ENCODE measurements at regions of chr19 and their contacts with region 1.

Region 1: GRCh38 chr19:35135389-35135909 is 590 bp upstream of the LGI4 start:
- H3K4me3 Mint-ChIP-seq: no peak overlapping the region
- H3K27ac Mint-ChIP-seq: no peak overlapping the region
- H3K4me1 Mint-ChIP-seq: peaks cover 21% of the 10 kb centered on the region
- H3K27me3 Mint-ChIP-seq: peaks cover 37% of the 10 kb centered on the region

Region 2: DNA sequence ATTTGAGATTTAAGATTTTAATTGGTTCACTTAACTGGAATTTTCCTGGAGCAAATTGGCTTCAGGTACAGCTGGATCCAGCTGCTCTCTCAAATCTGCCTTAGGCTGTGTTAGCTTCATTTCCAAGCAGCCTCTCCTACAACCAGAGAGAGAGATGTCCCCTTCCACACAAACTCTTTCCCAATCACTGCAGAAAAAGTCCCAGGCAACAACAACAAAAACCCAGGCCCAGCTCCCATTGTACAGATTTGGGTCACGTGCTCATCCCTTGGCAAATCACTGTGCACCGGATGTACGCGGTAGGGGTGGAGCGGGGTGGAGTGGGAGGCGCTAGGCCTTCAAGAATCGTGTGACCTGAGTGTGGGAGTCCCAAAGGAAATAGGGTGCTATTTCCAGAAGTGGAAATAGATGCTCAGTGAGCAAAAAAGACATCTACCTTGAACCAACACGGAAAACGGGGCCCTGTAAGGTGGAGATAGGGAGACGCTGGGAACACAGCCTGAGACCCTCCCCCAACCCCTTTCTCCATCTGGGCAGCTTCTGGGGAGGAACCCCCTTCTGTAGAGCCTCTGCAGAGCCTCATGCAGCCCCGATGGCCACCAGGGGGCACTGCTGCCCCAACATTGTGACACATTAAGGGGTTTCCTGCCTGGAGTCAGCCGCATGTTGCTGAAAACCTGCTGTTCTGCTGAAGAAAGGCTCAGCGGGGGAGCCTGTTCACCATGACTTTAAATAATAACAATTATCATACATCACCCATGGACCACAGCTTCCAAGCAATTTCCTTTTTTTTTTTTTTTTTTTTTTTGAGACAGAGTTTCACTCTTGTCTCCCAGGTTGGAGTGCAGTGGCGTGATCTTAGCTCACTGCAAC is 68.5 kb before region 1 on chr19:
- intact Hi-C with region 1: loop called (anchors 1 kb)
- H3K4me3 Mint-ChIP-seq: peak overlapping the region; percentile 30
- H3K27ac Mint-ChIP-seq: no peak overlapping the region
- H3K4me1 Mint-ChIP-seq: peaks cover 6% of the 10 kb centered on the region
- H3K27me3 Mint-ChIP-seq: peaks cover 13% of the 10 kb centered on the region

Region 3: GRCh38 chr19:35114353-35115176 is 20.9 kb before region 1 on chr19:
- intact Hi-C with region 1: loop called (anchors 1 kb)
- H3K4me3 Mint-ChIP-seq: peak overlapping the region; percentile 61
- H3K27ac Mint-ChIP-seq: peak overlapping the region; percentile 72
- H3K4me1 Mint-ChIP-seq: peaks cover 48% of the 10 kb centered on the region
- H3K27me3 Mint-ChIP-seq: peaks cover 44% of the 10 kb centered on the region

Region 4: DNA sequence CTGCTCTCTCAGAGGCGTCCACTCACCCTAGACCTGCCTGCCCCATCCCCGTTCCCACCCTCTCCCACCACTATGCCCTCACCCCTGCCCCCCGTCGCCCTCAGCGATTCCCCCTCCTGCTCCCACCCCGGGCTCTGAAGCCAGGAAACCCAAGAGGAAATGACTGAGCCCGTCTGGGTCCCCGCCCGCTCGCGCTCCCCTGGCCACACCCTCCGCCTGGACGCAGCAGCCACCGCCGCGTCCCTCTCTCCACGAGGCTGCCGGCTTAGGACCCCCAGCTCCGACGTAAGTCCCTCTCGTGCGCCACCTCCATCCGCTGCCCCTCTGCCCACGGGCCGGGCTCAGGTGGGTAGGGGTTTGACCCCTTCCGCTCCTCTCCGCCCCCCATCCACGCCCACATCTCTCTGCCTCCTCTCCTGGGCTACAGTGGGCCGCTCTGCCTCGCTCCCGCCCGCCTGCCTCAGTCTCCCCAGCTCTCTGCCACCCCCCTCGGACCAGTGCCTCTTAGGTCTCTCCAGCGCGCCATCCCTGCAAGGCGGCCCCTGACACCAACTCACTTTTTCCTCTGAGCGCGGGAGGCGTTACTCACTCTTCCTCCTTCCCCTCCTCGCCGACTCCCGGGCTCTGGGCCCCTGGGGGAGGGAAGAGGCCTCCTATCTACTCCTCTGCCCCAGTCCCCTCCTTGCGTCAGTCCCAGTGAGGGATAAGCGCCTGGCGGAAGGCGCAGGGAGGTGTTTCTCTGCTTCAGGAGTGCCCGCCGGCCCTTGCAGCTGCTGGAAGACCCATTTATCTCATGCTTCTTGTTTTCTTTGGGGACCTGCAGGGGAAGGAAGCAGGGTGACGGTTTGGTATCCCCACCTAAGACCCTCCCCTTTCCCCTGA is 19.3 kb after region 1 on chr19 and contains the start of gene FXYD5:
- intact Hi-C with region 1: no loop called
- H3K4me3 Mint-ChIP-seq: peak within 1 kb of the TSS; percentile 100
- H3K27ac Mint-ChIP-seq: peak within 1 kb of the TSS; percentile 98
- H3K4me1 Mint-ChIP-seq: peaks cover 62% of the 10 kb centered on the region
- H3K27me3 Mint-ChIP-seq: peaks cover 14% of the 10 kb centered on the region

Measured in dendritic cell treated with granulocyte-macrophage colony-stimulating factor and Interleukin-4, amounts not matched to agents 40 ng/mL and 50 ng/mL, for 4 days (primary cell).